HEK293 (cell line): ENCODE measurements at regions of chr11 and their contacts with region 1.

Region 1: GRCh38 chr11:47426061-47426956 is at the start of gene PSMC3:
- H3K4me3 ChIP-seq: peak within 1 kb of the TSS; percentile 100
- H3K27ac ChIP-seq: peak within 1 kb of the TSS; percentile 73
- H3K4me1 ChIP-seq: 0 out of 2 replicates have a peak, but pooled peaks cover 3% of the 10 kb centered on the region
- CTCF ChIP-seq: no peak

Region 2: DNA sequence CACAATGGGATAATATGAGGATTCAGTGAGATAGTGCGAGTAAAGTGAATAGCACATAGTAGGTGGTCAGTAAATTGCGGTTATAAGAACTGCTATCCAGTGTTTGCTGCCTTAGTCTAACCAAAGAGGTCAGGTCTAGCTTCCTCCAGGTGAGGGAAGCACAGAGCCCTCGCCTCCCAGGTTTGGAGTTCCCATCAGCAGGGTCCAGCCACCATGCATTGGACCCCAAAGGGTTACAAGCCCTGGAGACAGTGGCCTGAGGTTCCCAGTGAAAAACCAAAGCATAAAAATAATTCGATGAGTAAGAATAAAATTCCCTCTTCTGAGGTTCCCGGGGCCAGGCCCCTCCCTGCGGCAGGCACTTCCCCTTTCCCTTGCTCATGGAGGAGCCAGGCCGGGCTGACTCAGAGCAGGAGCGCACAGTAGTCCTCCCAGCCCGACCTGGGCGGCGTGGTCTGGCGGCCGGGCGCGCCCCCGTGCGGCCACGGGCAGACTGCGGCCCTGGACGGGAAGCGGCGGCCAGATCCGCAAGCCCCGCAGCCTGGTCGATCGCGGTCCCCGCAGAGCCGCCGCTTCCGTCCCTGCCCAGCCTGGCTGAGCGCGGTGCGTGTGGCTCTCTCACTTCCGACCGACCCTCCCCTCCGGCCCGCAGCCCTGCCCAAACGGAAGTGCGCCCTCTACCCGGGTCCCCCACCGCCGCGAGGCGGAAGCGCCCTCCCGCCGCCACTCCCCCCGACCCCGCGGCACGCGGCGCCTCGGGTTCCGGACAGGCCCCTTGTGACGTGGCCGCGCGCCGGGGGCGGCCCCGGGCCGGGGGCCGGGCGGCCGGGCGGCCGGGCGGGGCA is 18.3 kb before region 1 on chr11 and contains the start of gene SLC39A13:
- CTCF ChIA-PET with region 1: interaction called, 14 read pairs
- POLR2A ChIA-PET with region 1: interaction called, 37 read pairs
- H3K4me3 ChIP-seq: peak within 1 kb of the TSS; percentile 86
- H3K27ac ChIP-seq: peak within 1 kb of the TSS; percentile 82
- H3K4me1 ChIP-seq: no peaks in the 10 kb centered on the region
- CTCF ChIP-seq: peak; percentile 61; the same call in 1 of the 2 replicates

Region 3: GRCh38 chr11:47415949-47416472 is 10.3 kb before region 1 on chr11:
- CTCF ChIA-PET with region 1: interaction called, 14 read pairs
- POLR2A ChIA-PET with region 1: interaction called, 37 read pairs
- H3K4me3 ChIP-seq: no peak overlapping the region
- H3K27ac ChIP-seq: peak overlapping the region; percentile 34
- H3K4me1 ChIP-seq: no peaks in the 10 kb centered on the region
- CTCF ChIP-seq: no peak

Region 4: GRCh38 chr11:47454180-47454644 is 27.9 kb after region 1 on chr11:
- CTCF ChIA-PET with region 1: interaction called, 10 read pairs
- POLR2A ChIA-PET with region 1: interaction called, 6 read pairs
- H3K4me3 ChIP-seq: no peak overlapping the region
- H3K27ac ChIP-seq: no peak overlapping the region
- H3K4me1 ChIP-seq: no peaks in the 10 kb centered on the region
- CTCF ChIP-seq: peak; percentile 79